K562 (cell line): ENCODE measurements at regions of chr5 and their contacts with region 1.

Region 1: DNA sequence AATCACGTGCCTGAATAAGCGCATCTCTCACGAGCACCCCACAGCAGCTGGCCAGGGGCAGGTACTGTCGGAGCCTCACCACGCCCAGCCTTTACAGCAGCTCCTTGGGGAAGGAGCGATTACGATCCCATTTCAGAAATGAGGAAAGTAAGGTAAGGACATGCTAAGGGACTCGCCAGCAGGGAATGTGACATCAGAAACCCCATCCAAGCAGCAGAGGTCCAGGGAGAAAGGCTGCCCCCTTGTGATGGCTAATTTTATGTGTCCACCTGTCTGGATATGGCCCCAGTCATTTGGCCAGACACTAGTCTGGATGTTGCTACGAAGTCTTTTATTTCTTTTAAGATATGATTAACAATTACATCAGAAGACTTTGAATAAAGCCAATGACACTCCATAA is 77.3 kb downstream of the UBE2QL1 start:
- DNase-seq: peak; percentile 63 to 77 (median 66)
- ATAC-seq: peak; percentile 92
- H3K4me3 ChIP-seq: no peak overlapping the region
- H3K27ac ChIP-seq: no peak overlapping the region
- H3K4me1 ChIP-seq: no peaks in the 10 kb centered on the region
- H3K27me3 ChIP-seq: peaks cover 46 to 75% of the 10 kb centered on the region in 2 experiments; a peak in 4 of 5 replicates
- CTCF ChIP-seq: peak; percentile 76 to 78 (median 78)
- EP300 ChIP-seq: no peak
- POLR2A ChIP-seq: no peak
- RAD21 ChIP-seq: peak; percentile 69 to 88

Region 2: GRCh38 chr5:6291961-6292360 is 233.9 kb before region 1 on chr5:
- CTCF ChIA-PET with region 1: no interaction called
- POLR2A ChIA-PET with region 1: no interaction called
- in situ Hi-C with region 1: no loop called
- intact Hi-C with region 1: loop called (anchors 1 kb)
- DNase-seq: peak in 1 of 4 experiments; percentile 27
- ATAC-seq: peak; percentile 80
- H3K4me3 ChIP-seq: no peak overlapping the region
- H3K27ac ChIP-seq: no peak overlapping the region
- H3K4me1 ChIP-seq: no peaks in the 10 kb centered on the region
- H3K27me3 ChIP-seq: no peaks in the 10 kb centered on the region
- CTCF ChIP-seq: peak in 2 of 3 experiments; percentile 33 to 61; a peak in 4 of 6 replicates
- EP300 ChIP-seq: no peak
- POLR2A ChIP-seq: no peak
- RAD21 ChIP-seq: peak; percentile 62 to 73

Region 3: DNA sequence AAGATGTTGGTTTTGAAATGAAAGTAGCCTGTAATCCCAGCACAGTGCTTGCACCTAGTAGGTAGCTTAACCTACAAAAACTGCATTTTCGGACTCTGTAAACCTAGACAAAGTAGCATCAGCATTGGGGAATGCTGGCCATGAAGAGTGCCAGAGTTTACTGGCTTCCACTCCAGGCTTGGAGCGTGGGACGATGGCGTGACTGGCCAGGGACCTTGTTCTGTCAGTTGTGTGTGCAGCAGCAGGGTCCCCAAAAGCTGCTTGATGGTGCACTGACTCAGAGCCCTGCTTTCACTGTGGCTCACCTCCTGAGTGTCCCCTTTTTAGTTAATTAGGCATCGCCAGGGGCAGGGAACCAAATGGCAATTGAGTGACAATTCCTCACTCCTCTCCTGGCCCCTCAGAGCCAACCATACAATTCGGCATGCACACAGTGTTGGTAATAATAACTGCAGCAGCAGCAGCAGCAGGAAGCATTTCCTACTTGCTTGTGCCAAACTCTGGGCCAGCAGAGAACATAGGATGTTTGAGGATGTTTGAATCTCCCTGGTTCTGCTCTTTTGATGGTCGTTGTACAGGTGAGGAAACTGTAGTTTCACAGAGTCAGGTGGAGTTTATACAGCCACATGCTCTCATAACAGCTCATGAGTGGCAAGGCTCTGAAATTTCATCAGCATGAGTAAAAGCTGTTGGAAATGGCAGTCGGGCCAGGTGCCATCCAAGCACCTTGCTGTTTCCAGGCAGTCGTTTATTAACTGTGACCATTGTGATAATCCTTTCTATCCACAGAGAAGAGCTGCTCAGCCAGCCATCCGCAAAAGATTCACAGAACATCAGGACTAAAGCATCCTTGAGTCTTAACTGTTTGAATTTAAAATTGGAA is 73.0 kb before region 1 on chr5:
- CTCF ChIA-PET with region 1: no interaction called
- POLR2A ChIA-PET with region 1: no interaction called
- in situ Hi-C with region 1: no loop called
- intact Hi-C with region 1: no loop called
- DNase-seq: no peak
- ATAC-seq: no peak
- H3K4me3 ChIP-seq: no peak overlapping the region
- H3K27ac ChIP-seq: no peak overlapping the region
- H3K4me1 ChIP-seq: peaks cover 0 to 5% of the 10 kb centered on the region in 2 experiments; a peak in 1 of 5 replicates
- H3K27me3 ChIP-seq: peaks cover 27 to 68% of the 10 kb centered on the region in 2 experiments
- CTCF ChIP-seq: no peak
- EP300 ChIP-seq: no peak
- POLR2A ChIP-seq: no peak
- RAD21 ChIP-seq: no peak

Region 4: GRCh38 chr5:6745706-6746222 is 219.9 kb after region 1 on chr5:
- CTCF ChIA-PET with region 1: no interaction called
- POLR2A ChIA-PET with region 1: no interaction called
- in situ Hi-C with region 1: no loop called
- intact Hi-C with region 1: loop called (anchors 5 kb)
- DNase-seq: peak in 3 of 4 experiments; percentile 40 to 57 (median 43)
- ATAC-seq: peak; percentile 80
- H3K4me3 ChIP-seq: no peak overlapping the region
- H3K27ac ChIP-seq: no peak overlapping the region
- H3K4me1 ChIP-seq: no peaks in the 10 kb centered on the region
- H3K27me3 ChIP-seq: no peaks in the 10 kb centered on the region
- CTCF ChIP-seq: peak; percentile 51 to 79 (median 74); a peak in 5 of 6 replicates
- EP300 ChIP-seq: no peak
- POLR2A ChIP-seq: no peak
- RAD21 ChIP-seq: peak; percentile 68 to 80